Activated B cell treated with CpG ODN at 0.5 μM for 24 hours (primary cell): ENCODE measurements at regions of chr9 and their contacts with region 1.

Region 1: GRCh38 chr9:83622939-83623678 is at the start of gene IDNK:
- DNase-seq: peak; percentile 73
- ATAC-seq: peak; percentile 91
- H3K4me3 Mint-ChIP-seq: peak within 1 kb of the TSS; percentile 93
- H3K27ac Mint-ChIP-seq: peak within 1 kb of the TSS; percentile 95
- H3K4me1 Mint-ChIP-seq: peaks cover 33% of the 10 kb centered on the region
- H3K27me3 Mint-ChIP-seq: no peaks in the 10 kb centered on the region
- CTCF ChIP-seq: no peak
- total RNA-seq, gene IDNK: 7.9 and 8.4 TPM in 2 replicates

Region 2: DNA sequence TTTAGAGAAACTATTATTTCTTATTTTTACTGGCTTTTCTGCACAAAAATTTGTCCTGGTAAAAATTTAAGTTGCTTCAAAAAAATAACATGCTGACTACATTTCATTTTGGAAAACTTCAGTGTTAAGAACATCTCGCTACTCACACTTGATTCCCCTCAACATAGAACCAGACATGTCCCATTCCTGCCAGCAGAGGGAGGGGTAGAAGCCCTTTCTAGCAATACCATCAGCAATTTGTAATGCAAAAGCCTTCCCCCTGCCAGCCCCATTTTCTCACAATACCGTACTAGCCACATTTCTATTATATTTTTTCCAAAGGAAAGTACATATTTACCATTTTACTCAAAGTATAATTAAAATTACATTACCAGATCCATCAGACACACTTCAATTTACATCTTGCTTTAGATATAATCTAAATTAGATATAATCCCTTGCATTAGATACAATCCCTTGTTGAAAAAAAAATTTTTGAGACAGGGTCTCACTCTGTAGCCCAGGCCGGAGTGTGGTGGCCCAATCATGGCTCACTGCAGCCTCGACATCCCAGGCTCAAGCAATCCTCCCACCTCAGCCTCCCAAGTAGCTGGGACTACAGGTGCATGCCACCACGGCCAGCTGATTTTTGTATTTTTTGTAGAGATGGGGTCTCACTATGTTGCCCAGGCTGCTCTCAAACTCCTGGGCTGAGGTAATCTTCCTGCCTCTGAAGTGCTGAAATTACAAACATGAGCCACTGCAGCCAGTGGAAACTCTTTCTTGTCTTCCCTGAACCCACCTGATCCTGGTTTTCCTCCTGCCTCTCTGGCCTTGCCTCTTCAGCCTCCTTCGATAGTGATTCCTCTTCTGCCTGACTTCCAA is 39.7 kb before region 1 on chr9:
- CTCF ChIA-PET with region 1: no interaction called
- POLR2A ChIA-PET with region 1: no interaction called
- intact Hi-C with region 1: no loop called
- DNase-seq: no peak
- ATAC-seq: peak; percentile 42
- H3K4me3 Mint-ChIP-seq: no peak overlapping the region
- H3K27ac Mint-ChIP-seq: no peak overlapping the region
- H3K4me1 Mint-ChIP-seq: no peaks in the 10 kb centered on the region
- H3K27me3 Mint-ChIP-seq: no peaks in the 10 kb centered on the region
- CTCF ChIP-seq: no peak

Region 3: GRCh38 chr9:83649080-83649479 is 26.0 kb after region 1 on chr9:
- CTCF ChIA-PET with region 1: interaction called, 34 read pairs
- POLR2A ChIA-PET with region 1: no interaction called
- intact Hi-C with region 1: loop called (anchors 1 kb)
- DNase-seq: peak; percentile 61
- ATAC-seq: peak; percentile 89
- H3K4me3 Mint-ChIP-seq: no peak overlapping the region
- H3K27ac Mint-ChIP-seq: no peak overlapping the region
- H3K4me1 Mint-ChIP-seq: peaks cover 6% of the 10 kb centered on the region
- H3K27me3 Mint-ChIP-seq: no peaks in the 10 kb centered on the region
- CTCF ChIP-seq: no peak

Region 4: DNA sequence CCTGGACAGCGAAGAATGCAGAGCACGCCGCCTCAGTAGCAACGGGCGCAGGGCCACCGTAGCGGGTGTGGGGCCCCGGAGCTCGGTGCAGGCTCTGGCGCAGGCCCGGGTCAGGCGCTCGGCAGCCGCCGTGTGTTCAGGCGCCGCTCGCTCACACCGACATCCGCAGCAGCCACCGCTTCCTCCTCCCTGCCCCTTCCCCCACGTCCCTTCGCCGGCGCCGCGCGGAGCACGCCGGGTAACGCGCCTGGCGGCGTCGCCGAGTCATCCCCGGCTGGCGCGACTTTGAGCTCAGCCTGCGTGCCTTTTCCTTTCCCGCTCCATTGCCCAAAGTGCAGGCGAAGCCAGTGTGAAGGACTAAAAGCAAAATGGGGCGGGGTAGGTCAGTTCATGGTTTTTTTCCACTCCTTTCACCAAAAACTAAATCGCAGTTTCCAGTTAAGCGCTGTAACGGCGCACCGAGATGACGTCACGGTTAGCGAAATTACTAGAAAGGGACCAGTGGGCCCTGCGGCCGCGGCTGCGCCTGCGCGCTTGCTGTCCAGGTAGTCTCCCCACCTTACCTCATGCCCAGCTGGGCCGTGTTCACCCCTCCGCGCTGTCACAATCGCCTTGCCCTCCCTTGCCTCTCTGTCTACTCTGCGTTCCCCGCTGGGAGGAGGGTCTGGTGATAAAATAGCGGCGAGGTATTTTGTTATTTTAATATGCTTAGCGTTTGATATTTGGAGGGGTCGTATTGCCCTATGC is 84.8 kb after region 1 on chr9 and contains the start of gene UBQLN1:
- CTCF ChIA-PET with region 1: interaction called, 11 read pairs
- POLR2A ChIA-PET with region 1: interaction called, 29 read pairs
- intact Hi-C with region 1: loop called (anchors 1 kb)
- DNase-seq: peak; percentile 92
- ATAC-seq: peak; percentile 85
- H3K4me3 Mint-ChIP-seq: peak within 1 kb of the TSS; percentile 99
- H3K27ac Mint-ChIP-seq: peak within 1 kb of the TSS; percentile 99
- H3K4me1 Mint-ChIP-seq: peaks cover 36% of the 10 kb centered on the region
- H3K27me3 Mint-ChIP-seq: no peaks in the 10 kb centered on the region
- CTCF ChIP-seq: no peak
- total RNA-seq, gene UBQLN1: 84.4 and 96.8 TPM in 2 replicates

Region 5: DNA sequence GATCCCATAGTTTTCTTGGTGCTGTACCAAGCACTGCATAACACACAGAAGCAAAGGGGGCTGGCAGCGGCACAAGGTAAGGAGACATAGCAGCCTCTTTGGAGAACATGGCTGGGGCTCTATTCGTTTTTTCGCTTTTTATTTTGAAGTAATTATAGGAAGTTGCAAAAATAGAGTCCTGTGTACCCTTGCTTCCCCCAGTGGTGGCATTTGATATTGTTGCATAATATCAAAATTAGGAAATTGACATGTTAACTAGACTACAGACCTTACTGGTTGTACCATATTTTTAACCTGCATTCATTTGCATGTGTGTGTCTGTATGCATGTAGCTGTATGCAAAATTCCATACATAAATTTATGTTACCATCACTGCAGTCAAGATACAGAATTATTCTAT is 91.2 kb after region 1 on chr9:
- CTCF ChIA-PET with region 1: interaction called, 11 read pairs
- POLR2A ChIA-PET with region 1: interaction called, 29 read pairs
- intact Hi-C with region 1: loop called (anchors 1 kb)
- DNase-seq: no peak
- ATAC-seq: peak; percentile 60
- H3K4me3 Mint-ChIP-seq: no peak overlapping the region
- H3K27ac Mint-ChIP-seq: no peak overlapping the region
- H3K4me1 Mint-ChIP-seq: peaks cover 4% of the 10 kb centered on the region
- H3K27me3 Mint-ChIP-seq: no peaks in the 10 kb centered on the region
- CTCF ChIP-seq: no peak

Region 6: DNA sequence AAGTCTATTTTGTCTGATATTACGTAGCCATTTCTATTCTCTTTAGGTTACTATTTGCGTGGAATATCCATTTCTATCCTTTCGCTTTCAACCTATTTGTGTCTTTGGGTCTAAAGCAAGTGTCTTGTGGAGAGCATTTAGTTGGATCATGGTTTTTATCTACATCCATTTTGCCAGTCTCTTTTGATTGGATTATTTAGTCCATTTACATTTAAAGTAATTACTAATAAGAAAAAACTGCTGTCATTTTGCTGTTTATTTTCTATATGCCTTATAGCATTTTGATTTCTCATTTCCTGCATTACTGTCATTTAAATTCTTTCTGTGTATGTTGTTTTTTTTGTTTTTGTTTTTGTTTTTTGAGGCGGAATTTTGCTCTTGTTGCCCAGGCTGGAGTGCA is 110.6 kb after region 1 on chr9:
- CTCF ChIA-PET with region 1: no interaction called
- POLR2A ChIA-PET with region 1: no interaction called
- intact Hi-C with region 1: no loop called
- DNase-seq: no peak
- ATAC-seq: no peak
- H3K4me3 Mint-ChIP-seq: no peak overlapping the region
- H3K27ac Mint-ChIP-seq: no peak overlapping the region
- H3K4me1 Mint-ChIP-seq: no peaks in the 10 kb centered on the region
- H3K27me3 Mint-ChIP-seq: no peaks in the 10 kb centered on the region
- CTCF ChIP-seq: no peak

Region 7: DNA sequence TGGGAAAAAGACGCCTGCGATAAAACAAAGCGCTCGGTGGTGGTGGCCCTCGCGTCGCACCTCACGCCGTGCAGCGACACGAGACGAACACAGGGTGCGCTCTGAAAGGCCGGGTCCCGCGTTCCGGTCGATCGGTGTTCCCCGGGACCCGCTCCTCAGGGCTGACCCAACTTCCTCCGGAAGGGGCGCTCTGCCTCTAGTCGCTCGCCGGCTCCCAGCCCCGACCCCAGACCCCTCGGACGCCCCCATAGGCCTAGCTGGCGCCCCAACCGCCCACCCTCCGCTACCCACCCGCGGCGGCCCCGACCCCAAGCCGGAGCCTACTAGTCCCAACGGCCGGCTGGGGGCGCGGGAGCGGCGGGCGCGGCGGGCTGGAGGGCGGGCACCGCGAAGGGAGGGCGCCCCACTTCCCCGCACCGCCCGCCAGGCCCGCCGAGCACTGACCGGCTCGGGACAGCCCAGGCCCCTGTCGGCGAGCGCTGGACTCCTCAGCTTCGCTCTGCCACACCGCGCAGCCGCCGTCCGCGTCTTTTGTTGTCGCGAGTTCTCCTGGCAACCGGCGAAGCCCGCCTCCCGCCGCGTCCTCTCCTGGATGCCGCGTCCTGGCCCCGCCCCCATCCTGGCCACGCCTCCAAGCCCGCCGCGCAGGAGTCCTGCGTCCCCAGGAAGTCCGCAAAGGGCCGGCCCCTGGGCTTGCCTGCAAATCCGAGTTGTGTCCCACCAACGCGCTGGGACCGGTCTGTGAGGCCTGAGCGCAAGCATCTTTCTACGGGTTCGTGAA is 298.0 kb after region 1 on chr9 and contains the start of gene KIF27:
- CTCF ChIA-PET with region 1: interaction called, 3 read pairs
- POLR2A ChIA-PET with region 1: interaction called, 14 read pairs
- intact Hi-C with region 1: loop called (anchors 2 kb)
- DNase-seq: peak; percentile 99
- ATAC-seq: peak; percentile 85
- H3K4me3 Mint-ChIP-seq: peak within 1 kb of the TSS; percentile 91
- H3K27ac Mint-ChIP-seq: peak within 1 kb of the TSS; percentile 94
- H3K4me1 Mint-ChIP-seq: peaks cover 19% of the 10 kb centered on the region
- H3K27me3 Mint-ChIP-seq: no peaks in the 10 kb centered on the region
- CTCF ChIP-seq: no peak
- total RNA-seq, gene KIF27: 4.9 and 5.1 TPM in 2 replicates

Region 8: DNA sequence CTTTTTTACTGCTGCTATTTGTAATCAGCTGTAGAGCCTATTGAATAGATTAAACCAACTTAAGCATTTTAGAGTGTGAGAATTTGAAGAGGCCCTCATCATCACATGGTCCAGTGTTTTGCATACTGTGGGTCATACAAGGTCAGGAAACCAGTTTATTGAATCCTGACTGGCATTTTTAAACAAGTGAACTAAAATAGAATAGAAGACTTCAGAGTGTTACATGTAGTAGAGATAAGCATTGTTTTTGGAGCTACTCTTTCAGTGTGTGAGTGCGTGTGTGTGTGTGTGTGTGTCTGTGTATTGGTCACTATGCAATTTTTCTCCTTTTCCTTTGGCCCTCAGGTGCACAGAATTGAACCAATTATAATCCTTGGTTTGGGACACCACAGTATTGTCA is 603.0 kb after region 1 on chr9:
- CTCF ChIA-PET with region 1: no interaction called
- POLR2A ChIA-PET with region 1: interaction called, 13 read pairs
- intact Hi-C with region 1: no loop called
- DNase-seq: no peak
- ATAC-seq: no peak
- H3K4me3 Mint-ChIP-seq: no peak overlapping the region
- H3K27ac Mint-ChIP-seq: no peak overlapping the region
- H3K4me1 Mint-ChIP-seq: no peaks in the 10 kb centered on the region
- H3K27me3 Mint-ChIP-seq: peaks cover 16% of the 10 kb centered on the region
- CTCF ChIP-seq: no peak